Aorta (tissue), 5 donors: ENCODE measurements at regions of chr6 and their contacts with region 1.

Region 1: GRCh38 chr6:3410385-3411360 is 46.2 kb downstream of the SLC22A23 start:
- DNase-seq: peak in 1 of 2 donors; percentile 72
- ATAC-seq: no peak
- H3K4me3 ChIP-seq: no peak overlapping the region
- H3K27ac ChIP-seq: no peak overlapping the region
- H3K4me1 ChIP-seq: no peaks in the 10 kb centered on the region
- H3K27me3 ChIP-seq: no peaks in the 10 kb centered on the region

Region 2: DNA sequence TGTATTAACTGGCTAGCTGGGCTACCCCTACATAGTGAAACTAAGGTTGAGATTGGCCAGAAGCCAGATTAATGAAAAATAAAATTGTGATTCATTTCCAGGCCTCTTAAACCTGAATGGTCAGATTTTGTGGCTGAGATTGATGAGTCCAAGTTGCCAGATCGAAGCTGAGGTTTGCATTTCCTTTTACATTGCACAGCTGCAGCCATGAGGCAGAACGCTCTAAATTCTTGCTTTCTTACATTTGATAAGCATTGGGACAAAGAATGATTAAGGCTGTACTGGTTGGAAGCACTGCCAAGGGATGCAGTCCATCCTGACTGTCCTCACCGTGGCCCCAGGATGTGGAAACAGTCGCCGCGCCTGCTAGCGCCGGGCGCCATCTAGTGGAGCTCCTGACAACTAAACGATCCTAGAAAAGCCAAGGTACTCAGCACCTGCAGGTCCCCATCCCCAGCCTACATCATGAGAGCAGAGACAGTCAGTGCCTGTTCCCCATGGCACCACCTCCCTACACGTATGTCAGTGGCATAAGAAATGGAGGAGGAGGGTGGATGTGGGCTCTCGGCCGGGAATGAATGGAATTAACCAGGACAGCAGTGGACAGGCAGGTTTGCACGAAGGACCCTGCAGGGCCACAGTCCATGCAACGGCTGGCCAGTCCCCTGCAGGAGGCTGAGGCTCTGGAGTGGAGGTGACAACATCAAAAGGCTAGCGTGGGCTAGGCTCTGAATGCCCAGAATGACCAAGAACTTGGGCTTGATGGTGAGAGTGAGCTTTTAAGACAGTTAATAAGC is 321.9 kb after region 1 on chr6:
- intact Hi-C with region 1: loop called (anchors 5 kb)
- DNase-seq: peak; percentile 83 to 88
- ATAC-seq: peak; percentile 84
- H3K4me3 ChIP-seq: no peak overlapping the region
- H3K27ac ChIP-seq: peak overlapping the region in 1 of 2 donors; percentile 34
- H3K4me1 ChIP-seq: no peaks in the 10 kb centered on the region
- H3K27me3 ChIP-seq: no peaks in the 10 kb centered on the region